ENCODE measurements at regions of chr10 and their contacts with region 1.

Region 1: GRCh38 chr10:71696628-71697326 is 22.8 kb downstream of the C10orf105 start:
- DNase-seq: peak; percentile 36 to 71 (median 54)
- ATAC-seq: peak; percentile 70
- H3K4me3 ChIP-seq: no peak overlapping the region
- H3K4me3 Mint-ChIP-seq: peak overlapping the region in 2 of 10 donors; percentile 16 to 48
- H3K27ac ChIP-seq: no peak overlapping the region
- H3K27ac Mint-ChIP-seq: peak overlapping the region in 1 of 9 donors; percentile 38
- H3K4me1 ChIP-seq: peaks cover 23 to 50% of the 10 kb centered on the region in 2 donors
- H3K4me1 Mint-ChIP-seq: peaks cover 6 to 41% (median 25%) of the 10 kb centered on the region in 7 donors
- H3K27me3 ChIP-seq: no peaks in the 10 kb centered on the region
- H3K27me3 Mint-ChIP-seq: no peaks in the 10 kb centered on the region

Region 2: DNA sequence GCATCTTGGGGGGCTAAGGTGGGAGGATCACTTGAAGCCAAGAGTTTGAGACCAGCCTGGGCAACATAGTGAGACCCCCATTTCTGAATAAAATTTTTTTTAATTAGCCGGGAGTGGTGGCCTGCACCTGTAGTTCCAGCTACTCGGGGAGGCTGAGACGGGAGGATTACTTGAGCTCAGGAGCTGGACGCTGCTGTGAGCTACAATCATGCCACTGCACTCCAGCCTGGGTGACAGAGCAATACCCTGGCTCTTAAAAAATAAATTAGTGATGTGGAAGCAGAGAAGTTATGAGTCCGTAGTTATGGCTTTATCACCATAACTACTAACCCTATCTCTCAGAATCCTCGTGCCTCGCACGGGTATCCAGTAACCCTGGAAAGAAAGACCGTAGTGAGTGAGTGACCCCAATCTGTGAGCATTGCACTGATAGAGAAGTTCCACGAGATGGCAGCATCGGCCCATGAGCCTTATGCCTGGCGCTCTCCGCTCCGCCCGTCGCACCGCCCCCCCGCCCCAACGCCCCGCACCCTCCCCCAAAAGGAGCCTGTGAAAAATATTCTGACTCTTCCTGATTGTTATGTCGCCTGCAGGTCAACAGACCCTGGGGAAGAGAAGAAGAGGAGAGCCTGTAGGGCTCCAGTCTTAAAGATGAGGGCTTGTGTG is 382.6 kb before region 1 on chr10:
- CTCF ChIA-PET with region 1: interaction called, 7 read pairs
- POLR2A ChIA-PET with region 1: no interaction called
- intact Hi-C with region 1: loop called (anchors 1 kb)
- DNase-seq: peak; percentile 18 to 56 (median 49)
- ATAC-seq: peak; percentile 62
- H3K4me3 ChIP-seq: no peak overlapping the region
- H3K4me3 Mint-ChIP-seq: peak overlapping the region in 3 of 10 donors; percentile 3 to 48 (median 25)
- H3K27ac ChIP-seq: no peak overlapping the region
- H3K27ac Mint-ChIP-seq: peak overlapping the region in 1 of 9 donors; percentile 55
- H3K4me1 ChIP-seq: peaks cover 5 to 6% of the 10 kb centered on the region in 2 donors
- H3K4me1 Mint-ChIP-seq: peaks cover 0 to 26% (median 13%) of the 10 kb centered on the region in 7 donors
- H3K27me3 ChIP-seq: no peaks in the 10 kb centered on the region
- H3K27me3 Mint-ChIP-seq: peaks cover 0 to 16% (median 14%) of the 10 kb centered on the region in 5 donors

Region 3: DNA sequence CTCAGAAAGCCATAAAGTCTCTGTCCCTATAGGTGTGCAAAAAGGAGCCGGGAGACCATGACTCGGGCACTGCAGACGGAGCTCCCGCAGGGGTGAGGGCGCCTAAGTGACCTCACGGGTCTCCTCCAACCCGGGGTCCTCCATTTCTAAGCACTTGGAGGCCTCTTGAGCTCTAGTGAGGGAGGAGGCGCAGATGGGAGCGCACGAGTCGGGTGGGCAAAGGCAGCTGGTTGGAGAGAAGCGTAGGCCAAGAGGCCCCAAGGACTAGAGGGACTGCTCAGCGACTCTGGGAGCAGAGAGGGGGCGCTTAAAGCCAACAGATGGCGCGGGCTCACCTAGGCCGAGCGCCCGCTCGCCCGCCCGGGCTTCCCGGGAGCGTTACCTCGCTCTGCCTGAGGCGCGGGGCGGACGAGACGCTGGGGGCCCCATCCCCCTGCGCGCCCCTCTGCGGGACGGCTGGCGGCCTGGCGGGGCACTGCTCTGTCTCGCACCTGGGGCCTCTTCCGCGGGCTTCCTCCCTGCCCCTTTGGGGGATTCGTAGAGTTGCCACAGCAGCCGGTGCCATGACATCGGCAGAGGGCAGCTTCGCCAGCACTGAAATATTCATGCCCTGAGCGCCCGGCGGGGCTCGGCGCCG is 300.6 kb before region 1 on chr10:
- CTCF ChIA-PET with region 1: interaction called, 6 read pairs
- POLR2A ChIA-PET with region 1: no interaction called
- intact Hi-C with region 1: loop called in 1 of 2 experiments (anchors 2 kb)
- DNase-seq: peak in 6 of 9 donors; percentile 18 to 33 (median 26)
- ATAC-seq: peak; percentile 68
- H3K4me3 ChIP-seq: peak overlapping the region; percentile 24
- H3K4me3 Mint-ChIP-seq: peak overlapping the region; percentile 11 to 83 (median 68)
- H3K27ac ChIP-seq: no peak overlapping the region
- H3K27ac Mint-ChIP-seq: no peak overlapping the region
- H3K4me1 ChIP-seq: no peaks in the 10 kb centered on the region
- H3K4me1 Mint-ChIP-seq: peaks cover 0 to 11% (median 4%) of the 10 kb centered on the region in 7 donors
- H3K27me3 ChIP-seq: peaks cover 0 to 16% of the 10 kb centered on the region in 2 donors
- H3K27me3 Mint-ChIP-seq: peaks cover 59 to 76% (median 67%) of the 10 kb centered on the region in 5 donors

Region 4: GRCh38 chr10:71476228-71477011 is 220.4 kb before region 1 on chr10:
- CTCF ChIA-PET with region 1: no interaction called
- POLR2A ChIA-PET with region 1: no interaction called
- intact Hi-C with region 1: no loop called
- DNase-seq: no peak
- ATAC-seq: no peak
- H3K4me3 ChIP-seq: no peak overlapping the region
- H3K4me3 Mint-ChIP-seq: peak overlapping the region in 1 of 10 donors; percentile 1
- H3K27ac ChIP-seq: no peak overlapping the region
- H3K27ac Mint-ChIP-seq: no peak overlapping the region
- H3K4me1 ChIP-seq: no peaks in the 10 kb centered on the region
- H3K4me1 Mint-ChIP-seq: peaks cover 0 to 16% (median 7%) of the 10 kb centered on the region in 7 donors
- H3K27me3 ChIP-seq: no peaks in the 10 kb centered on the region
- H3K27me3 Mint-ChIP-seq: peaks cover 0 to 9% (median 0%) of the 10 kb centered on the region in 5 donors